Left ventricle myocardium superior (tissue), 1 donor: ENCODE measurements at regions of chr20 and their contacts with region 1.

Region 1: DNA sequence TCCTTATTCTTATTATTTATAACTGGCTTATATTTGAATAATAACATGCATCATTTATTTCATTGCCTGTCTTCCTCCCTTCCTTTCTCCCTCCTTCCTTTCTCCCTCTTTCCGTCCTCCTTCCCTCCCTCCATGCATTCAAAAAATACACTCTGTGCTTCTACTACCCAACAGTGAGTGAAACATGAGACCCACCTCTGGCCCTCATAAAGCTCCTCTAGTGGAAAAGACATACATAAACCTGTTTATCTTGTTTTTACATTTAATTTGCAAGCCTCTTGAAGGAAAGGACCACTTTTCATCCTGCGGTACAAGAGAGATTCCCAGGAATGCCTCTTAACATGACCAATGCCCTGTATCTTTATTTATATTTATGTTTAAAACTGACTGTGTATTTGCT is 21.8 kb upstream of the ISM1 start:
- DNase-seq: no peak
- ATAC-seq: no peak

Region 2: GRCh38 chr20:13397300-13397724 is 198.0 kb after region 1 on chr20:
- intact Hi-C with region 1: loop called (anchors 10 kb)
- DNase-seq: no peak
- ATAC-seq: no peak